Pancreas (tissue), 10 donors: ENCODE measurements at regions of chr20 and their contacts with region 1.

Region 1: DNA sequence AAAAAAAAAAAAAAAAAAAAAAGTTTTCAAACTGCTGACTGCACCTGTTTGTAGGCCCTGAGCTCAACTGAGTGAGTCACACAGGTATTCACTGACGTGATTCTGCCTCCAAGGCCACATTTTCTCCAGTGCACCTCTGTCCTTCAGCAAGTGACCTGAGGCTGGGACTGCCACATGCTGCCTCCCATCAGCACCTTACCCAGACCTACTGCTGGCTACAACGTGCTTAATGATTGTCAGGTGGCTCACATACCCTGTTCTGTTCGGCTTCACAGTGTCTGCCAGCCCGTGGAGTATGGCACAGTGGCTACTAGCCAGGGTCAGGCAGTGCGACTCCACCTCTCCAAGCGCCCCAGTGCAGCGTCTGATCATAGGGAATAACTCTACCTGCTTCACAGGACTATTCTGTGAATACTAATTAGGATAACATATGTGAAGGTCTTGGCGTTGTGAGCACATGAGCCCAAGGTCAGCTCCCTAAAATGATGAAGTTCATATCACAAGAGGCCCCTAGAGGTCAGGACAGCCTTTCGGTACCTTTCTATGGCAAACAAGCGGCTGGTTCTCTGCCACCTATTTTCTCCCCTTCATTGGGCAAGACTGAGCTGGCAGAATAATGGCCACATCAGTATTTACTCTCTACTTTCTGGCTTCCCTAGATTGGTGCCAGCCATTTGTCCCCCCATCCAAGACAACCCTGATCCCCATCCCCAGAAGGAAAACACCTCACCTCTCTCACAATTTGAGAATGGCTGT is 28.1 kb downstream of the RIPOR3 start:
- DNase-seq: peak; percentile 64 to 86 (median 78)
- ATAC-seq: peak; percentile 76 to 86 (median 83)
- H3K4me3 ChIP-seq: no peak overlapping the region
- H3K27ac ChIP-seq: peak overlapping the region; percentile 75 to 96 (median 91)
- H3K4me1 ChIP-seq: peaks cover 41 to 55% (median 45%) of the 10 kb centered on the region in 3 donors
- H3K27me3 ChIP-seq: no peaks in the 10 kb centered on the region
- CTCF ChIP-seq: peak in 2 of 4 donors; percentile 20 to 25

Region 2: DNA sequence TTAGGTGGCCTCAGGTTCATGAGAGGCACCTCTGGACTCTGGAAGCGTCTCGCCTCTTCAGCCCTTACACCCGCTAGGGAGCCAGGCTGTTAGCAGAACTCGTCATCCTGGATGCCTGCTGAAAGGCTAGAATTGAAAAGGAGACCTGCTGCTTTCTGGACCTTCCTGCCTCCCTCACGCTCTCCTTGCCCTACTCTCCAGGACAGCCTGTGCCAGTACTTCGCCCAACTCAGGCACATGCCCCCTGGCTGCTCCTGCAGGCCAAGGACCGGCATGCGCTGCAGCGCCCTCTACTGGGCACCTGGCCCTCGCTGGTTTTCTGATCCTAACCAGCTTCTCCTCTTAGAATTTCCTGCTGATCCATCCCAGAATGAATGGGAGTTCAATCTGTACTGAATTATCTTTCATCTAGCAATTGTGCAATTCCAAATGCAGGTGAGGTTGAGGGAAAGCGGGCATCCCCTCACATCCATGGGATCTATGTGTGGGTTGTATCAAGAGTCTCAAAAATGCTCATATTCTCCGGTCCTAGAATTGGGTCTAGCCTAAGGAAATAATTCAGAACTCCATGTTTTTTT is 75.2 kb before region 1 on chr20:
- intact Hi-C with region 1: no loop called
- DNase-seq: peak in 5 of 6 donors; percentile 38 to 92 (median 66)
- ATAC-seq: peak; percentile 48 to 86 (median 60)
- H3K4me3 ChIP-seq: no peak overlapping the region
- H3K27ac ChIP-seq: no peak overlapping the region
- H3K4me1 ChIP-seq: peaks cover 0 to 5% (median 0%) of the 10 kb centered on the region in 3 donors
- H3K27me3 ChIP-seq: no peaks in the 10 kb centered on the region
- CTCF ChIP-seq: peak; percentile 66 to 77 (median 72)

Region 3: GRCh38 chr20:50713657-50714101 is 50.4 kb after region 1 on chr20:
- intact Hi-C with region 1: loop called in 2 of 3 experiments (anchors 5 to 10 kb)
- DNase-seq: peak in 4 of 6 donors; percentile 32 to 57 (median 51)
- ATAC-seq: peak; percentile 63 to 89 (median 84)
- H3K4me3 ChIP-seq: no peak overlapping the region
- H3K27ac ChIP-seq: no peak overlapping the region
- H3K4me1 ChIP-seq: peaks cover 0 to 25% (median 4%) of the 10 kb centered on the region in 3 donors
- H3K27me3 ChIP-seq: no peaks in the 10 kb centered on the region
- CTCF ChIP-seq: peak in 3 of 4 donors; percentile 25 to 36 (median 29)

Region 4: GRCh38 chr20:51608061-51608460 is 944.8 kb after region 1 on chr20:
- intact Hi-C with region 1: no loop called
- DNase-seq: no peak
- ATAC-seq: no peak
- H3K4me3 ChIP-seq: no peak overlapping the region
- H3K27ac ChIP-seq: no peak overlapping the region
- H3K4me1 ChIP-seq: no peaks in the 10 kb centered on the region
- H3K27me3 ChIP-seq: no peaks in the 10 kb centered on the region
- CTCF ChIP-seq: no peak